ENCODE measurements at regions of chr5 and their contacts with region 1.

Region 1: DNA sequence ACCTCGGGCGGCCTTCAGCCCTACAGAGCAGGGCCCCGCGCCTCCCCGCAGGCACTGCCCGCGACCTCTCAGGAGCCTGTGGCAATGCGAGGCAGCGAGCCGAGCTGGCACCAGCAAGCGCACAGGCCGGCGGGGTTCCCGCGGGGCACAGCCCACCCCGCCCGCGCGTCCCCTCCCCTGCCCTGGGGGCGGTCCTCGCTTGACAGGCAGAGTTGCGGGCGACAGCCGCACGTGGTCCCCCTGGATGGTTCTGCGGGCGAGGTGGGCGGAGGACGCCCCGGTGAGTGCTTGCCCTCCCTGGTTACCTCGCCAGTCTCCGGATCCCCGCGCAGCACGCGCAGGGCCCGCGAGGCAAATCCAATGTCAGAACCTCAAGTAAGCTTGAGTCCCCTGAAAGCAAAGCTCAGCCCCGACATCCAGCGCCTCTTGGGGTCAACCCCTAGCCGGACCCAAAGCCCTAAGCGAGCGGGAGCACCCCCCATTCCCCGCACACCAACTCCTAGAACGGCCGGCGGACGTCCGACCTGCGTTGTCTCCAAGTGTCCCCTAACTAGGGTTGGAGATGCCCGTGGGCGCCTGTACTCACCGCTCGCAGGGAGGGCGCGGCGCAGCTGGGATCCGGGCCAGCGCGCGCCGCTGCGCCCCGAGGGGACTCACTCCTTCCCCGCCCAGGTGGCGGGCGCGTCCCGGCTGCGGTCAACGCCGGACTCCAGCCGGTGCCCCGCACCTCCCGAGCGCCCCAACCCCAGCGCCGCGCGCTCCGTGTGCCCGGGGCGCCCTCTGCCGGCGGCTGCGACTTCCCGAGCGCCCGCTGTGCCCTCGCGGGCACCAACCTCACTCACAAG is at the start of gene DRD1:
- DNase-seq: peak; percentile 31
- ATAC-seq: peak; percentile 41
- H3K4me3 ChIP-seq: no peak within 1 kb of the TSS
- H3K4me3 Mint-ChIP-seq: peak within 1 kb of the TSS; percentile 34
- H3K27ac ChIP-seq: no peak within 1 kb of the TSS
- H3K27ac Mint-ChIP-seq: no peak within 1 kb of the TSS
- H3K4me1 ChIP-seq: no peaks in the 10 kb centered on the region
- H3K4me1 Mint-ChIP-seq: peaks cover 2% of the 10 kb centered on the region
- H3K27me3 ChIP-seq: peaks cover 0 to 29% (median 8%) of the 10 kb centered on the region in 4 experiments
- H3K27me3 Mint-ChIP-seq: peaks cover 61% of the 10 kb centered on the region
- CTCF ChIP-seq: peak; percentile 41
- total RNA-seq, gene DRD1: not detected in 2 replicates

Region 2: DNA sequence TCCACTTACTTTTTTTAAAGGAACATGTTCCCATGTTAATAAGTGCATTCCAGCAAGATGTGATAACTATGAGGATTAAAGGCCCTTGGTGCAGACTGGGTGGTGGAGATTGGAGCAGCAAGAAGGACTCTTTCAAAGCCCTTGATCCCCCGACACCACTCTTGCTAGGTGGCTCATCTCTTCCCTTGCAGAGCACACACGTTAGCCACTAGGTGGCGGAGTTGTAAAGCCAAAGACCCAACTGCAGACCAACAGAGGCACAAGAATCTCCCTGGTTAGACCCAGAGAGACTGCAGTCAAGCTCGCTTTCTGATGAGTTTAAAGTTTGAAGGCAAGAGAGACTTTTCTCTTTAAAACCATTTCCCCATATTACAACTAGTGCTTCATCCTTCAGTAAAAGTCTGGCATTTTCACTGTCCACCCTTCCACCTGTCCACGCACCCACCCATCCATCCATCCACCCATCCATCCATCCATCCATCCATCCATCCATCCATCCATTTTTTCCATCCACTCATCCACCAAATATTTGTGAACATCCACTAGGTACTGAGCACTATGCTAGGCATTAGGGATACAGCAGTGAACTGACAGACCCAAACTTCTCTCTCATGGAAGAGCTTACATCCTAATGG is 493.0 kb before region 1 on chr5:
- CTCF ChIA-PET with region 1: no interaction called
- POLR2A ChIA-PET with region 1: no interaction called
- intact Hi-C with region 1: loop called (anchors 5 kb)
- DNase-seq: peak; percentile 38
- ATAC-seq: no peak
- H3K4me3 ChIP-seq: no peak overlapping the region
- H3K4me3 Mint-ChIP-seq: no peak overlapping the region
- H3K27ac ChIP-seq: no peak overlapping the region
- H3K27ac Mint-ChIP-seq: no peak overlapping the region
- H3K4me1 ChIP-seq: no peaks in the 10 kb centered on the region
- H3K4me1 Mint-ChIP-seq: no peaks in the 10 kb centered on the region
- H3K27me3 ChIP-seq: no peaks in the 10 kb centered on the region
- H3K27me3 Mint-ChIP-seq: peaks cover 4% of the 10 kb centered on the region
- CTCF ChIP-seq: peak; percentile 56

Measured in B cell (primary cell).